Astrocyte of the cerebellum (primary cell): ENCODE measurements at regions of chr6 and their contacts with region 1.

Region 1: GRCh38 chr6:108152446-108152845 is 13.4 kb upstream of the NR2E1 start:
- DNase-seq: no peak
- H3K4me3 ChIP-seq: no peak overlapping the region
- CTCF ChIP-seq: no peak

Region 2: GRCh38 chr6:107056796-107057195 is 1095.7 kb before region 1 on chr6:
- in situ Hi-C with region 1: no loop called
- DNase-seq: no peak
- H3K4me3 ChIP-seq: no peak overlapping the region
- CTCF ChIP-seq: no peak

Region 3: GRCh38 chr6:108068618-108069017 is 83.8 kb before region 1 on chr6:
- in situ Hi-C with region 1: loop called (anchors 5 kb)
- DNase-seq: no peak
- H3K4me3 ChIP-seq: no peak overlapping the region
- CTCF ChIP-seq: no peak

Region 4: DNA sequence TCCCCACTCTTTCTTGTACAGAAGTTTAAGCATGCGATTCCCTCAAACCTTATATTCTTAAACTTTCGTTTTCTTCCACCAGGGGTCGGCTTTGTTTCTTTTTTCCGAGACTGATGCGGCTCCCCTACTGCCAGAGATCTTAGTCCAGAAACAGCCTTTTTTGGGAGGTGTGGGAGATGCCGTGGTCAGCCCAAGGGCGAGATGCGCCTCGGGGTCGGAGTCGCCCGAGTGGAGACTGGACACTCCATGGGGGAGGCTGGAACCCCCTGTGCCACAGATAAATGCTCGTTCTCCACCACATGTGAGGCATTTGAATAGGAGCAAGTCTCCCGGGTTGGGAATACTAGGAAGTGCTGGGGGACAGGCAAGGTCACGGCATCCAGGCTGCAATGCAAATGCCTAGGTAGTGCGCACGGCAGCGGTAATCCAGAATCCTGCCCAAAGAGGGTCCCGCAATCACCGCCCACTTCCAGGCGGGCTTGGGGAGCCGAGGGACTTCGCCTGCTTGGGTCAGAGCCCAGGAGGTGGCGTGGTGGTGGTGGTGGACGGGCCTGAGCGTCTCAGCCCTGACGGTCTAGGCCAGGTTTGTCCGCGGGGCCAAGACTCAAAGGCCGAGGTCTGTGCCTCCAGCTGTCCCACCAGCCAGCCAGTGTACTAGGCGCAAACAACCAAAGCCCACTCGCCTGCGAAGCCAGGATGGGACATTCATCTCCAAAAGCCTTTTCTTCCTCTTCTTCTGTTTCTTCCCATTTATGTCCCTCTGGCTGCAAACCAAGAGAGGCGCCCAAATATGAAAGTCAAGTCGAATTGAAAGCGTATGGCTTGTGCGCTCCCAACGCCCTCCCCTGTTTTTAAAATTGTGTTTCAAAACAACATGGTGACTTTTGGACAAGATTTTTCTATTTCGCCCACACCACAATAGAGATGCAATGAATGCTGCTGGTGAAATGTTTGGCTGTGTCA is 38.6 kb before region 1 on chr6:
- in situ Hi-C with region 1: loop called (anchors 5 kb)
- DNase-seq: peak; percentile 53
- H3K4me3 ChIP-seq: peak overlapping the region; percentile 17
- CTCF ChIP-seq: peak; percentile 55

Region 5: GRCh38 chr6:108200631-108201030 is 48.2 kb after region 1 on chr6:
- in situ Hi-C with region 1: loop called (anchors 5 kb)
- DNase-seq: peak; percentile 62
- H3K4me3 ChIP-seq: no peak overlapping the region
- CTCF ChIP-seq: no peak

Region 6: DNA sequence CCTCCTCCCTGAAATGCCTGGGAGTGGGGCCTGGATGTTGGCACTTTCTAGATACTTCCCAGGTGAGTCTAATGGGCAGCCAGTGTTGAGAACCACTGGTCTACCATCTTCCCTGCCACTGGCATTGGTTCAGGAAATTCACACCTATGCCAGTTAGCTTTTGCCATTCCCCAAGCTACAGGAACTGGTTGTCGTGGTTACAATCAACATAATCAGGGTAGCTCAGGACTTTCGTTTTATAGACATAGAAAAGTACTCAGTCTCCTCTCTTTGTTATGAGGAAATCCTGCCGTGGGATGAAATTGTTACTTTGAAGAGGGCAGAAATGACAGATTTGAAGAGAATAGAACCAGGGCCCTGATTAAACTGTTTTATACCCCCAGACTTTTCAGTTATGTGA is 280.3 kb after region 1 on chr6:
- in situ Hi-C with region 1: no loop called
- DNase-seq: no peak
- H3K4me3 ChIP-seq: no peak overlapping the region
- CTCF ChIP-seq: no peak

Region 7: DNA sequence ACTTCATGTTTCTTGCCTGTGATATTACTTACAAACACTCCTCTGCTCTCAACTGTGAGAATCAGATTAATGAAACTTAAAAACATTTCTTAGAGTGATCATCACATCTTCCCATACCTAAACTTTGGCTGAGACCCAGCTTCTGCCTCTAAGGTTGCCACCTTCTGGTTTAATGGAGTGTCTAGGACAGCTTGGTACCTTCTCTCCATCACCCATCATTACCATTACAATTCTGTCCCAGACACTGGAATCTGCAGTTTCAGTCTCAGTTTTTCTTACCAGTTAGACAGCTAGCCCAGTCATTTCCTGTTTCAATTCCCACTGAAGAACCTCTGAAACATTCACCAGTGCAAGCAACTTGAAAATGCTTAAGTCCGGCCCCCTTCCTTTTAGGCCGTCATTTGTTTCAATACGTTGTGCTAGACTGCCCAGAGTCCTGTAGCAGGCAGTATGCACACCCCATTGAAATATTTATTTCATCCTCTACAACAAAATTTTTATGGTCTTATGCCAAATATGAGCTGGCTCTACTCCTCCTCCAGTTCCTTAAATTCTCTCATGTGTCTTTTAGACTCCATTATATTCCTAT is 301.2 kb after region 1 on chr6:
- in situ Hi-C with region 1: no loop called
- DNase-seq: peak; percentile 59
- H3K4me3 ChIP-seq: no peak overlapping the region
- CTCF ChIP-seq: peak; percentile 3